CD4-positive, alpha-beta memory T cell (primary cell): ENCODE measurements at regions of chr2 and their contacts with region 1.

Region 1: GRCh38 chr2:10434886-10435819 is 13.0 kb downstream of the ODC1 start:
- DNase-seq: peak in 4 of 5 donors; percentile 48 to 77 (median 66)
- H3K4me3 ChIP-seq: no peak overlapping the region
- H3K4me3 Mint-ChIP-seq: peak overlapping the region in 2 of 8 donors; percentile 15 to 24
- H3K27ac ChIP-seq: no peak overlapping the region
- H3K27ac Mint-ChIP-seq: peak overlapping the region in 2 of 7 donors; percentile 38 to 75
- H3K4me1 ChIP-seq: peaks cover 15% of the 10 kb centered on the region
- H3K4me1 Mint-ChIP-seq: peaks cover 4 to 13% (median 8%) of the 10 kb centered on the region in 4 donors
- H3K27me3 ChIP-seq: no peaks in the 10 kb centered on the region
- H3K27me3 Mint-ChIP-seq: peaks cover 0 to 5% of the 10 kb centered on the region in 2 donors

Region 2: DNA sequence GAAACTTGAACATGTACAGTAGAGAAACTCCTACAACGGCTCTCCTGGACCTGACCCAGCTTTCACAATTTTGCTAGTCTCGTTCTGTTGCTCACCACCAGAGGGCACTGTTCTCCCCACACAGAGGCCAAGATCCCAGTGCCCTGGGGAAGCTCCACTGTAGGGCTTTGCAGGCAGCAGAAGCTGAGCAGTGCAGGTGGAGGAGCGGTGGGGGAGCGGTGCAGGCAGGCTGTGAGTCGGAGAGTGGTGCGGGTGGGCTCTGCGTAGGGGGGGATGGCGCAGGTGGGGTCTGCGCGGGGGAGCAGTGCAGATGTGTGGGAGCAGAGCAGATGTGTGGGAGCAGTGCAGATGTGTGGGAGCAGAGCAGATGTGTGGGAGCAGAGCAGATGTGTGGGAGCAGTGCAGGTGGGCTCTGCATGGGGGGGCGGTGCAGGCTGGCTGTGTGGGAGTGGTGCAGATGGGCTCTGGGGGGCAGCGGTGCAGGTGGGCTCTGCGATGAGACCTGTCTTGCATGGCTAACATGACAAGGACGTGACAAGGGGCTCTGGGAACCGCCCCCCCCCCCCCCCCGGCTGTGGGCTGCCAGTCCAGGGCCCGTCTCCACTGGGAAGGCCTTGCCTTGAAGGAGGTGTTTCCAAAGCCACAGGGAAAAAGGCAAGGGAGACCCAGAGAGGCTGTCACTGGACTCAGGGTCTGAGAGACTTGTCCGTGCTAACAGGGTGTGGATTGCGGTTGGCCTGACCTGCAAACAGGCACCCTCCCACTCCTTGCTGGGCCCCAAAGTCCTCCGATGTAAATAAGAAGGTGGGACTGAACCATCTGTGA is 362.3 kb before region 1 on chr2:
- CTCF ChIA-PET with region 1: interaction called, 190 read pairs
- POLR2A ChIA-PET with region 1: interaction called, 11 read pairs
- intact Hi-C with region 1: loop called (anchors 1 kb)
- DNase-seq: peak; percentile 77 to 81 (median 79)
- H3K4me3 ChIP-seq: no peak overlapping the region
- H3K4me3 Mint-ChIP-seq: no peak overlapping the region
- H3K27ac ChIP-seq: no peak overlapping the region
- H3K27ac Mint-ChIP-seq: no peak overlapping the region
- H3K4me1 ChIP-seq: no peaks in the 10 kb centered on the region
- H3K4me1 Mint-ChIP-seq: peaks cover 3 to 7% (median 4%) of the 10 kb centered on the region in 4 donors
- H3K27me3 ChIP-seq: peaks cover 2% of the 10 kb centered on the region
- H3K27me3 Mint-ChIP-seq: peaks cover 27 to 35% of the 10 kb centered on the region in 2 donors

Region 3: DNA sequence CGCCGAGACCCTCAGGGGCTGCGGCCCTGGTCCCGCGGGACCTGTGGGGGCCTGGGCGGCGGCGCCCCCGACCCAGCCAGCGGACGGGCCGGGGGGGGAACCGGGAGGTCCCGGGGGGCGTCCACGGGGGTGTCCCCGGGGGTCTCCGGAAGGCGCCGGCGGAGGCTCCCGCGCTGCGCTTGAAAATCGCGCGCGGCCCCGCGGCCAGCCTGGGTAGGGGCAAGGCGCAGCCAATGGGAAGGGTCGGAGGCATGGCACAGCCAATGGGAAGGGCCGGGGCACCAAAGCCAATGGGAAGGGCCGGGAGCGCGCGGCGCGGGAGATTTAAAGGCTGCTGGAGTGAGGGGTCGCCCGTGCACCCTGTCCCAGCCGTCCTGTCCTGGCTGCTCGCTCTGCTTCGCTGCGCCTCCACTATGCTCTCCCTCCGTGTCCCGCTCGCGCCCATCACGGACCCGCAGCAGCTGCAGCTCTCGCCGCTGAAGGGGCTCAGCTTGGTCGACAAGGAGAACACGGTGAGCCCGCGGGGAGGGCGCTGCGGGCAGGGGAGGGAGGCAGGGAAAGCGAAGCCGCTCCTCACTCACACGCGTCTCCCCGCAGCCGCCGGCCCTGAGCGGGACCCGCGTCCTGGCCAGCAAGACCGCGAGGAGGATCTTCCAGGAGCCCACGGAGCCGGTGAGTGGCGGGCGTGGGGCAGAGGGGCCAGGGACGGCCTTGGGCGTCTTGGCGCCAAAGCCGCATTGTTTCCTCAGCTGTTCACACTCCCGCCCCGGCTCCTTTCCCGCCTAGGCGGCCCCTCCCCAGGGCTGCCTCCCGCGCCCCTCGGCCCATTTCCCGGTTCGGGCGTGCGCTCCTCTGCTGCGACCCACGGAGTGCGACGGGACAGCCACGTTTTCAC is 312.5 kb before region 1 on chr2 and contains the start of gene RRM2:
- CTCF ChIA-PET with region 1: interaction called, 178 read pairs
- POLR2A ChIA-PET with region 1: interaction called, 14 read pairs
- intact Hi-C with region 1: loop called (anchors 1 kb)
- DNase-seq: peak; percentile 81 to 87 (median 85)
- H3K4me3 ChIP-seq: peak within 1 kb of the TSS; percentile 32 to 50
- H3K4me3 Mint-ChIP-seq: peak within 1 kb of the TSS; percentile 89 to 99 (median 98)
- H3K27ac ChIP-seq: no peak within 1 kb of the TSS
- H3K27ac Mint-ChIP-seq: peak within 1 kb of the TSS; percentile 51 to 91 (median 58)
- H3K4me1 ChIP-seq: peaks cover 52% of the 10 kb centered on the region
- H3K4me1 Mint-ChIP-seq: peaks cover 32 to 56% (median 42%) of the 10 kb centered on the region in 4 donors
- H3K27me3 ChIP-seq: peaks cover 5% of the 10 kb centered on the region
- H3K27me3 Mint-ChIP-seq: peaks cover 5 to 12% of the 10 kb centered on the region in 2 donors
- total RNA-seq, gene RRM2: 0.42 TPM in 1 of 2 experiments, not detected in the other

Region 4: GRCh38 chr2:10267551-10268465 is 167.3 kb before region 1 on chr2:
- CTCF ChIA-PET with region 1: interaction called, 49 read pairs
- POLR2A ChIA-PET with region 1: interaction called, 5 read pairs
- intact Hi-C with region 1: loop called (anchors 1 kb)
- DNase-seq: no peak
- H3K4me3 ChIP-seq: no peak overlapping the region
- H3K4me3 Mint-ChIP-seq: no peak overlapping the region
- H3K27ac ChIP-seq: no peak overlapping the region
- H3K27ac Mint-ChIP-seq: no peak overlapping the region
- H3K4me1 ChIP-seq: peaks cover 7% of the 10 kb centered on the region
- H3K4me1 Mint-ChIP-seq: peaks cover 1 to 7% (median 4%) of the 10 kb centered on the region in 4 donors
- H3K27me3 ChIP-seq: no peaks in the 10 kb centered on the region
- H3K27me3 Mint-ChIP-seq: no peaks in the 10 kb centered on the region

Region 5: DNA sequence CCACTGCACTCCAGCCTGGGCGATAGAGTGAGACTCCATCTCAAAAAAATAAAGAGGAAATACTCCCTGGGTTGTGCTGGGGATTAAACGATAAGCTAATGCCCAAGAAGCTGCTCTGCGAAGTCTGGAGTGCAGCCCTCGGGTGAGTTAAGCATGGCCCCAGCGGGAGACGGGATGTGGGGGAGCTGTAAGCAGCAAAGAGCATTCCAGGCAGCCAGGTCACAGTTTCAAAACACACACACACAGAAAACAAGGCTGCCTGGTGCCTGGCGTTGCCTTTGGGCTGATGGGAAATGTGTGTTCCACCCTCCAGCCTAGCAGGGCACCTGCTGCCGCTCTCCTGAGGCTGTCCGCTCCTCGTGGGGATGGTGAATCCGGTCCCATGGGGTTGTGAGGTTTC is 11.1 kb before region 1 on chr2:
- CTCF ChIA-PET with region 1: interaction called, 23 read pairs
- POLR2A ChIA-PET with region 1: no interaction called
- intact Hi-C with region 1: no loop called
- DNase-seq: no peak
- H3K4me3 ChIP-seq: no peak overlapping the region
- H3K4me3 Mint-ChIP-seq: no peak overlapping the region
- H3K27ac ChIP-seq: no peak overlapping the region
- H3K27ac Mint-ChIP-seq: no peak overlapping the region
- H3K4me1 ChIP-seq: no peaks in the 10 kb centered on the region
- H3K4me1 Mint-ChIP-seq: no peaks in the 10 kb centered on the region
- H3K27me3 ChIP-seq: no peaks in the 10 kb centered on the region
- H3K27me3 Mint-ChIP-seq: no peaks in the 10 kb centered on the region